Calu3 (cell line): ENCODE measurements at regions of chr16 and their contacts with region 1.

Region 1: GRCh38 chr16:54929090-54930004 is 1.3 kb upstream of the IRX5 start:
- DNase-seq: peak; percentile 100
- H3K4me3 Mint-ChIP-seq: peak overlapping the region; percentile 95
- H3K27ac Mint-ChIP-seq: peak overlapping the region; percentile 84
- H3K4me1 Mint-ChIP-seq: peaks cover 18% of the 10 kb centered on the region
- H3K27me3 Mint-ChIP-seq: no peaks in the 10 kb centered on the region
- CTCF ChIP-seq: no peak

Region 2: GRCh38 chr16:53761962-53762721 is 1167.2 kb before region 1 on chr16:
- CTCF ChIA-PET with region 1: no interaction called
- intact Hi-C with region 1: loop called (anchors 5 kb)
- DNase-seq: no peak
- H3K4me3 Mint-ChIP-seq: peak overlapping the region; percentile 45
- H3K27ac Mint-ChIP-seq: peak overlapping the region; percentile 57
- H3K4me1 Mint-ChIP-seq: peaks cover 82% of the 10 kb centered on the region
- H3K27me3 Mint-ChIP-seq: no peaks in the 10 kb centered on the region
- CTCF ChIP-seq: no peak

Region 3: GRCh38 chr16:54334208-54334607 is 595.1 kb before region 1 on chr16:
- CTCF ChIA-PET with region 1: interaction called, 12 read pairs
- intact Hi-C with region 1: no loop called
- DNase-seq: no peak
- H3K4me3 Mint-ChIP-seq: no peak overlapping the region
- H3K27ac Mint-ChIP-seq: no peak overlapping the region
- H3K4me1 Mint-ChIP-seq: no peaks in the 10 kb centered on the region
- H3K27me3 Mint-ChIP-seq: peaks cover 87% of the 10 kb centered on the region
- CTCF ChIP-seq: no peak

Region 4: DNA sequence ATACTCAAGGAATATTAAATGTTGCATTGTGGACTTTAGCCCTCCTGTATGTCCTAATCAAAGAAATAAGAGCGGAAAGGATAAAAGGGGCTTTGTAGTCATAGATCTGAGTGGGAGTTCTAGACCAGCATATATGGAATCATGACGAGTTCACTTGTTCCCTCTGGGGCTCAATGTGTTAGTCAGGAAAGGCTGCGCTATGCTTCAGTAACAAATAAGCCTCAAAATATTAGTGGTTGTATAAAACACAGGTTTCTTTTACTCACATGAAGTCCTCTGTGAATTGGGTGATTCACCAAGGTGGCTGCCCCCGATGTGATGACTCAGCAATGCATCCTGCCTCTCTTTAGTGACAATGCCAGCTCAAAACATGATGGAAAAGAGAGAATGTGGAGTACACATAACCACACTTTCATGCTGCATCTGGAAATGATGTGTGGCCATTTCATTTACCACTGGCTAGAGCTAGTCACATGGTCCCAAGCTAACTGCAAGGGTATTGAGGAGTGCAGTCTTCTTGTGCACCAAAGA is 62.0 kb before region 1 on chr16:
- CTCF ChIA-PET with region 1: no interaction called
- intact Hi-C with region 1: no loop called
- DNase-seq: no peak
- H3K4me3 Mint-ChIP-seq: no peak overlapping the region
- H3K27ac Mint-ChIP-seq: no peak overlapping the region
- H3K4me1 Mint-ChIP-seq: no peaks in the 10 kb centered on the region
- H3K27me3 Mint-ChIP-seq: no peaks in the 10 kb centered on the region
- CTCF ChIP-seq: no peak

Region 5: GRCh38 chr16:54939510-54940279 is 10.3 kb after region 1 on chr16:
- CTCF ChIA-PET with region 1: no interaction called
- intact Hi-C with region 1: no loop called
- DNase-seq: no peak
- H3K4me3 Mint-ChIP-seq: no peak overlapping the region
- H3K27ac Mint-ChIP-seq: no peak overlapping the region
- H3K4me1 Mint-ChIP-seq: no peaks in the 10 kb centered on the region
- H3K27me3 Mint-ChIP-seq: no peaks in the 10 kb centered on the region
- CTCF ChIP-seq: no peak

Region 6: DNA sequence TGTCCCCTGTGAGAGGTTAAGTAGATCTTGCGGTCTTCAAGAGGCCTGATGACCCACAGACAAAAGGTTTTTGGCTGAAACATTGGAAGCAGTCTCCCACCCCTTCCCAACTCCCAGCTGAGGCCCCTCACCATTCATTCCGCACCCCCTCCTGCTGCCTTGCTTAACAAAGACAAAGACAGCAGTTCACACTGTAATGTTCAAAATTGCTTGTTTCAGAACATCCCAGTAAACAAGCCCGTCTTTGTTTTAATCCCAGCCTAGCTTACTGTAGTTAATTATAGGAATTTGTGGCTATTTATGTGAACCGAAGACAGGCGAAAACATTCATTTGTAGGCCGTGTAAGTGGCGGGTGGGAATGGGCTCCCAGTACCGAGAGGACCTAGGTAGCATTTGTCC is 57.1 kb after region 1 on chr16:
- CTCF ChIA-PET with region 1: no interaction called
- intact Hi-C with region 1: no loop called
- DNase-seq: no peak
- H3K4me3 Mint-ChIP-seq: no peak overlapping the region
- H3K27ac Mint-ChIP-seq: no peak overlapping the region
- H3K4me1 Mint-ChIP-seq: no peaks in the 10 kb centered on the region
- H3K27me3 Mint-ChIP-seq: peaks cover 81% of the 10 kb centered on the region
- CTCF ChIP-seq: no peak